Sigmoid colon (tissue), 7 donors: ENCODE measurements at regions of chr11 and their contacts with region 1.

Region 1: GRCh38 chr11:73141848-73142286 is 251 bp downstream of the FCHSD2 start:
- DNase-seq: peak; percentile 88
- H3K4me3 ChIP-seq: peak overlapping the region; percentile 67 to 94 (median 92)
- H3K27ac ChIP-seq: peak overlapping the region; percentile 95 to 98 (median 97)
- H3K4me1 ChIP-seq: peaks cover 0 to 59% (median 38%) of the 10 kb centered on the region in 4 donors
- H3K27me3 ChIP-seq: no peaks in the 10 kb centered on the region
- CTCF ChIP-seq: no peak
- EP300 ChIP-seq: no peak
- POLR2A ChIP-seq: no peak

Region 2: GRCh38 chr11:72722050-72722748 is 419.7 kb before region 1 on chr11:
- intact Hi-C with region 1: loop called (anchors 10 kb)
- DNase-seq: peak; percentile 93
- H3K4me3 ChIP-seq: peak overlapping the region; percentile 56 to 82 (median 62)
- H3K27ac ChIP-seq: peak overlapping the region; percentile 83 to 89 (median 88)
- H3K4me1 ChIP-seq: peaks cover 0 to 67% (median 53%) of the 10 kb centered on the region in 4 donors
- H3K27me3 ChIP-seq: no peaks in the 10 kb centered on the region
- CTCF ChIP-seq: no peak
- EP300 ChIP-seq: no peak
- POLR2A ChIP-seq: no peak

Region 3: DNA sequence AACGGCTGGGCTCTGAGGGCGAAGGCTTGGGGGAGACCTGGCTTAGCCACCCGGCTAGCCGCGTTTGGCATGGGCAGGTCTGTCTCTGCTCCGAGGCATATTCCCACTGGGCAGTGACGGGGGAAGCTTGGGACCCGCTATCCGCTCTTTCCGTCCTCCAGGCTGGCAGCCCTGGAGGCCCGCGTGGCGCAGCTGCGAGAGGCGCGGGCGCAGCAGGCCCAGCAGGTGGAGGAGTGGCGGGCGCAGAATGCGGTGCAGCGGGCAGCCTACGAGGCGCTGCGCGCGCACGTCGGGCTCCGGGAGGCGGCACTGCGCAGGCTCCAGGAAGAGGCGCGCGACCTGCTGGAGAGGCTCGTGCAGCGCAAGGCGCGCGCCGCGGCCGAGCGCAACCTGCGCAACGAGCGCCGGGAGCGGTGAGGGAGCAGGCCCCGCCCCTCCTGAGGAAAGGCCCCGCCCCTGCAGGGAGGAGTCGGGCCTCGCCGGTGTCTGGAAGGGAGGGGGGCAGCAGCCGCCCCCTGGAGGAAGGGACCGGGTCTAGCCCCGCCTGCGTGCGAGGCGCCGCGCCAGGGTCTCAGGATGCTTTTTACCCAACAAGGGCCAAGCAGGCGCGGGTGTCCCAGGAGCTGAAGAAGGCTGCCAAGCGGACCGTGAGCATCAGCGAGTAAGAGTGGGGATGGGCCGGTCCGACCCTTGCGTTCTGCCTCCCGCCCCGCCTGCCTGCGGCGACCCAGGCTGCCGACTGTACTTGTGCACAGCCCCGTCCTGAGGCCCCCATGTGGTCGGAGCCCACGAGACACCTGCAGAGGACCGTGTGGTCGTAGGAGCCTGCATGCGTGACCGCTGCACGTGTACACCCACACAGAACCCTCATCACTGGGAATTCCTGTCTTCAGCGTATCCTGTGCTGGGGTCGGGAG is 319.7 kb before region 1 on chr11:
- intact Hi-C with region 1: loop called (anchors 5 kb)
- DNase-seq: peak; percentile 94
- H3K4me3 ChIP-seq: peak overlapping the region; percentile 34 to 55 (median 48)
- H3K27ac ChIP-seq: peak overlapping the region; percentile 71 to 75 (median 74)
- H3K4me1 ChIP-seq: peaks cover 0 to 15% (median 12%) of the 10 kb centered on the region in 4 donors
- H3K27me3 ChIP-seq: no peaks in the 10 kb centered on the region
- CTCF ChIP-seq: peak in 1 of 4 experiments; percentile 24
- EP300 ChIP-seq: no peak
- POLR2A ChIP-seq: peak in 1 of 2 donors; percentile 36

Region 4: GRCh38 chr11:73055655-73056354 is 86.1 kb before region 1 on chr11:
- intact Hi-C with region 1: loop called (anchors 5 kb)
- DNase-seq: no peak
- H3K4me3 ChIP-seq: no peak overlapping the region
- H3K27ac ChIP-seq: no peak overlapping the region
- H3K4me1 ChIP-seq: peaks cover 0 to 40% (median 31%) of the 10 kb centered on the region in 4 donors
- H3K27me3 ChIP-seq: no peaks in the 10 kb centered on the region
- CTCF ChIP-seq: no peak
- EP300 ChIP-seq: no peak
- POLR2A ChIP-seq: no peak

Region 5: DNA sequence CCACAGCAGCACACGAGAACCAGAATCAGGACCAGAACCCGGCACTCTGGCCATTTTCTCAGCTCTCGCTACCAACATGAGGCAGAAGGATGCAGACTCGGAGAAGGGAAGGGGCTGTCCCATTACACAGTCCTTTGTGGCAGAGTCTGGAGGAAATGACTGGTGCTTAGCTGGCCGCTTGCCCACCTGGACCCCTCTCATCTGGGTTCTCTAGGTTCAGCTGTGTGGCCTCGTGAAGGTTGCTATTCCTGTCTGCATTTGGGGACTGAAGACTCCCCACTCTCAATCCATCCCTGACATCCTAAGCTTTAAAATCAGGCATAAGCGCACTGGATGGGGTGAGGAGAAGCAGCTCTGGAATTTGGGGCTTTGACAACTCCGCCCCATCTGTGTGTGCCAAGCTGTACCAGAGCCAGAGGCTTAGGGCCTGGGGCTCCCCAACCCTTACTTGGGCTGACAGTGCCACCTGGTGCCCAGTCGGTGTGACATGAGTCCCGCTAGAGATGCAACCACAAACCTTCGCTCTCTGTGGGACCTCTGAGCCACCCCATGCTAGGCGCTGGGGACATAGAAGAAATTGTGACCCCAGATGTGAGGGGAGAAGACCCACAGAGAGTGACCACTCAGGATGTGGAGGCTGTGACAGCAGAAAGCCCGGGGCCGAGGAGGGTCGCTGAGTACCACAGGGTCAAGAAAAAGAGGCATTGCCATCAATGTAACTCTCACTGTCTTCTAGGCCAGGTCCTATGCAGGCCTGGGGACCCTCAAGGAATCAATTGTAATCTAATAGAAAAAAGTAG is 36.1 kb after region 1 on chr11:
- intact Hi-C with region 1: loop called (anchors 2 kb)
- DNase-seq: peak; percentile 91
- H3K4me3 ChIP-seq: no peak overlapping the region
- H3K27ac ChIP-seq: peak overlapping the region; percentile 51 to 69 (median 61)
- H3K4me1 ChIP-seq: peaks cover 0 to 15% (median 13%) of the 10 kb centered on the region in 4 donors
- H3K27me3 ChIP-seq: no peaks in the 10 kb centered on the region
- CTCF ChIP-seq: peak; percentile 82 to 94 (median 84)
- EP300 ChIP-seq: no peak
- POLR2A ChIP-seq: no peak

Region 6: DNA sequence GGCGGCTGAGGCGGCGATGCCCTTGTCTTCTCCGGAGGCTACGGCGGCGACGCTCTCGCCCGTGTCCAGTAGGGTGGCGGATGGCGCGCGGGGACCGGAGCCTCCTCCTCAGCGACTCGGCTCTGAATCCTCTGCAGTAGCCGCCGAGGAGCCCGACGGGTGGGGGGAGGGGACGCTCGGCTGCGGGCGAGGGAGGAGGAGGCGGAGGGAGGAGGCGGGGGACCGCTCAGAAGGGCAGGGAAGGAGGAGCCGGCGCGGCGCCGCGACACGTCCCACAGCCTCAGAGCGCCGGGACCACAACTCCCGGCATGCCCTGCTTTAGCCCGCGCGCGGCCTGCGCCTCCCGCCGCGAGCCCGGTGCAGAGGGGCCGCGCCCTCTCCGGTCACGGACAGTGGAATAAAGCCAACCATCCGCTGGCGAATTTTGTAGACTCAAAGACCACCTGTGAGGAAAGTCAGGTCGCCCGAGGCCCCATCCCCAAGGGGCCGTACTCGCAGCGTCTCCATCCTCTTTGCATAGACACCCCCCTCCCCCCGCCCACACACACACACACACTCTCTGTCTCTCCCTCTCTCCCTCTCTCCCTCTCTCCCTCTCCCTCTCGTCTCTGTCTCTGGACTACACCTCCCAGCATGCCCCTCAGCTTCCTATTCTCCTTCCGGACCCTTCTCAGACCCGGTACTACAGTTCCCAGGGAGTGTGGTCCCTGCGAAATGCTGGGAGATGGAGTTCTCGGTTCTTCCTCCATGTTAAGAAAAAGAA is 456.3 kb after region 1 on chr11 and contains the start of gene FAM168A:
- intact Hi-C with region 1: loop called (anchors 5 kb)
- DNase-seq: peak; percentile 97
- H3K4me3 ChIP-seq: peak within 1 kb of the TSS; percentile 87 to 98 (median 92)
- H3K27ac ChIP-seq: peak within 1 kb of the TSS; percentile 78 to 88 (median 87)
- H3K4me1 ChIP-seq: peaks cover 0 to 23% (median 16%) of the 10 kb centered on the region in 4 donors
- H3K27me3 ChIP-seq: no peaks in the 10 kb centered on the region
- CTCF ChIP-seq: peak in 2 of 4 experiments; percentile 20 to 34
- EP300 ChIP-seq: peak in 1 of 4 donors; percentile 13
- POLR2A ChIP-seq: peak; percentile 55 to 58
- total RNA-seq, gene FAM168A: 20.7 to 37.7 (median 26.3) TPM